Gastrocnemius medialis (tissue), 4 donors: ENCODE measurements at regions of chr20 and their contacts with region 1.

Region 1: GRCh38 chr20:38275815-38276550 is 15.4 kb upstream of the KIAA1755 start:
- DNase-seq: no peak
- ATAC-seq: no peak
- H3K4me3 ChIP-seq: no peak overlapping the region
- H3K27ac ChIP-seq: no peak overlapping the region
- H3K4me1 ChIP-seq: peaks cover 3 to 10% of the 10 kb centered on the region in 2 donors
- H3K27me3 ChIP-seq: no peaks in the 10 kb centered on the region
- CTCF ChIP-seq: no peak
- POLR2A ChIP-seq: no peak

Region 2: DNA sequence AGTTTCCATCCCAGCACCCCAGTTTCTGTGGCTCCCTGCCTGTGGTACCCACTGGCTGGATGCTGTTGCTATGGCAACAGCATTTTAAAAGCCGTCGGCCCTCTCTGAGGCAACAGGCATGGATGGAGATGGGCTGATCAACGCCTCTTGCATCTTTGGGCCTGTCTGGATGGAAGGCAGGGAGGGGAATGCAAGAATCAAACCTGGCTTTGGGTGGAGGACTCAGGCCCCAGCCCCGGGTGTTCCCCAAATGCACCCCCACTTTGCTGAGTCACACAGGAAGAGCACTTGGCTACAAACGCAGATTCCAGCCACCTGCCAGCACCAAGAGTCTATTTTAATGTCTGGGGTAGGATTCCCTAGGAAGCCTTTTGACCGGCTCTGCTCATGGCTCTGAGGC is 65.2 kb before region 1 on chr20:
- in situ Hi-C with region 1: no loop called
- intact Hi-C with region 1: no loop called
- DNase-seq: no peak
- ATAC-seq: no peak
- H3K4me3 ChIP-seq: no peak overlapping the region
- H3K27ac ChIP-seq: no peak overlapping the region
- H3K4me1 ChIP-seq: peaks cover 7 to 11% of the 10 kb centered on the region in 2 donors
- H3K27me3 ChIP-seq: no peaks in the 10 kb centered on the region
- CTCF ChIP-seq: no peak
- POLR2A ChIP-seq: no peak

Region 3: DNA sequence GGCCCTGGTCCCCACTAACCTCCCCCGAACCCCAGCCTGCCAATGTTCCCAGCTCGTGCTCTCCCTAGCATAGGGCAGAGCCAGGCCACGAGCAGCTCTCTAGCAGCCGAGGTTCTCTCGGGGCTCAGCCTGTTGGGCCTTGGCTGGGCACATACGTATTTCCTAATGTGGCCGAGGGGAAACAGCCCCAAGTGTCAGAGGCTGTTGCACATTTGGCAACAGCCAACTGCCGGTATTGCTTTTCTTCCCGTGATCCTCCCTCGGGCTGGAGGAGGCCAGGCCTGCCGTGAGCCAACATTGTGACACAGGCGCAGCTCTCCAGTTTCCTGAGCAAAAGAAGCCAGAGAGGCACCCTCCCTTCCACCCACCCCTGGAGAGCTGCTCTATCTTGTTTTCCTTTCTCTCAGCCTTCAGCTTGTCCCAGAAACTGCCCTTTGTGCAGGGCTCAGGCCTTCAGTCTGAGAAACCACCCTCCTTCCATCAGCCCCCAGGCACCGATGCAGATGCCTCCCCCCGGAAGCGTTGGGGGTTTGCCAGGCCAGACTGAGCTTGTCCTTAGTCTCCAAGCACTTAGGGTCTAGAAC is 22.8 kb after region 1 on chr20:
- in situ Hi-C with region 1: no loop called
- intact Hi-C with region 1: loop called (anchors 2 kb)
- DNase-seq: peak; percentile 83 to 95
- ATAC-seq: peak; percentile 99
- H3K4me3 ChIP-seq: peak overlapping the region in 1 of 4 donors; percentile 7
- H3K27ac ChIP-seq: peak overlapping the region; percentile 78 to 90 (median 86)
- H3K4me1 ChIP-seq: peaks cover 0 to 7% of the 10 kb centered on the region in 2 donors
- H3K27me3 ChIP-seq: no peaks in the 10 kb centered on the region
- CTCF ChIP-seq: peak in 1 of 5 experiments; percentile 24
- POLR2A ChIP-seq: no peak

Region 4: GRCh38 chr20:38358556-38358955 is 82.6 kb after region 1 on chr20:
- in situ Hi-C with region 1: no loop called
- intact Hi-C with region 1: no loop called
- DNase-seq: no peak
- ATAC-seq: no peak
- H3K4me3 ChIP-seq: no peak overlapping the region
- H3K27ac ChIP-seq: no peak overlapping the region
- H3K4me1 ChIP-seq: no peaks in the 10 kb centered on the region
- H3K27me3 ChIP-seq: no peaks in the 10 kb centered on the region
- CTCF ChIP-seq: no peak
- POLR2A ChIP-seq: no peak

Region 5: DNA sequence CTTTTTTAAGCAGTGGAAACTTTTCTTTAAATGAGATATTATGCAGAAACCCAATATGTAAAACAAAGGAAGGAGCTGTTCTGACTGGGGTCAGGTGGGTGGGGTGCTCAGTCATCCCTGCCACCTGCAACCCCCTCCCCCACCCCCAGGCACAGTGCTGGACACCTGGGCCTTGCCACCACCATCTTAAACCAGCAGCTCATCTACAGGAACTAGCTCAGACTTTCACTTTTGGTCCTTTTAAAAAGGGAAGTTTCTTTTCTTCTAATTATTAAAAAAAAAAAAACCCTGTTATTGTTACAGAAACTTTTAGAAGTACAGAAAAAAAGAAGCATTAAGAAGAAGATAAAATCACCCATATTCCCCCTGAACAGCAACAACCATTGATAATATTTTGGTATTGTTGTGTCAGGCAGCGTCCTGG is 566.6 kb after region 1 on chr20:
- in situ Hi-C with region 1: no loop called
- intact Hi-C with region 1: no loop called
- DNase-seq: no peak
- ATAC-seq: no peak
- H3K4me3 ChIP-seq: no peak overlapping the region
- H3K27ac ChIP-seq: no peak overlapping the region
- H3K4me1 ChIP-seq: no peaks in the 10 kb centered on the region
- H3K27me3 ChIP-seq: no peaks in the 10 kb centered on the region
- CTCF ChIP-seq: no peak
- POLR2A ChIP-seq: no peak